A673 (cell line): ENCODE measurements at regions of chr9 and their contacts with region 1.

Region 1: GRCh38 chr9:80449513-80449912 is 877.7 kb downstream of the TLE4 start:
- DNase-seq: no peak
- H3K4me3 ChIP-seq: no peak overlapping the region
- H3K27ac ChIP-seq: peak overlapping the region; percentile 82
- H3K4me1 ChIP-seq: peaks cover 16% of the 10 kb centered on the region
- H3K27me3 ChIP-seq: no peaks in the 10 kb centered on the region
- CTCF ChIP-seq: no peak

Region 2: GRCh38 chr9:79471580-79472543 is 977.7 kb before region 1 on chr9:
- CTCF ChIA-PET with region 1: no interaction called
- POLR2A ChIA-PET with region 1: no interaction called
- intact Hi-C with region 1: loop called (anchors 5 kb)
- DNase-seq: peak; percentile 61
- H3K4me3 ChIP-seq: no peak overlapping the region
- H3K27ac ChIP-seq: no peak overlapping the region
- H3K4me1 ChIP-seq: no peaks in the 10 kb centered on the region
- H3K27me3 ChIP-seq: no peaks in the 10 kb centered on the region
- CTCF ChIP-seq: peak; percentile 53

Region 3: DNA sequence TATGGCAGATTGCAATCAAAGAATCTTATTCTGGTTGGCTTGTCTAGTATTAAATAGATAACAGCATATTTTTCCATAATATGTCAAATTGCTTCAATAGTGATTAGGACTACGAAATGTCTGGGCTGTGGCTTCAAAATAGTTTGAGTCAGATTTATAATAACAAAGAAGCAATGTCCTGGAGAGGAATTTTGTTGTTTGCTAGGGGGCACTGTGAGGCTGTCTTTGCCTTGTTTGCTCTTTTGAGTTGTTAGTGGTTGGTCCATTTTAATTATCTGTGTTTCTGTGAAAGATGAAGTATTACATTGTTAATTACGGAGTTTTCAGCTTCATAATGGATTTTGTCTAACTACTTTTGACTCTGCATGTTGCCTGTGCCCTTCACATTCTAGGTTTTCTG is 164.2 kb before region 1 on chr9:
- CTCF ChIA-PET with region 1: no interaction called
- POLR2A ChIA-PET with region 1: no interaction called
- intact Hi-C with region 1: loop called (anchors 1 kb)
- DNase-seq: peak; percentile 17
- H3K4me3 ChIP-seq: no peak overlapping the region
- H3K27ac ChIP-seq: no peak overlapping the region
- H3K4me1 ChIP-seq: no peaks in the 10 kb centered on the region
- H3K27me3 ChIP-seq: no peaks in the 10 kb centered on the region
- CTCF ChIP-seq: peak; percentile 54

Region 4: GRCh38 chr9:80400624-80401230 is 48.8 kb before region 1 on chr9:
- CTCF ChIA-PET with region 1: no interaction called
- POLR2A ChIA-PET with region 1: no interaction called
- intact Hi-C with region 1: no loop called
- DNase-seq: no peak
- H3K4me3 ChIP-seq: no peak overlapping the region
- H3K27ac ChIP-seq: no peak overlapping the region
- H3K4me1 ChIP-seq: no peaks in the 10 kb centered on the region
- H3K27me3 ChIP-seq: no peaks in the 10 kb centered on the region
- CTCF ChIP-seq: no peak

Region 5: GRCh38 chr9:80586786-80587330 is 137.3 kb after region 1 on chr9:
- CTCF ChIA-PET with region 1: interaction called, 5 read pairs
- POLR2A ChIA-PET with region 1: no interaction called
- intact Hi-C with region 1: loop called (anchors 5 kb)
- DNase-seq: peak; percentile 82
- H3K4me3 ChIP-seq: no peak overlapping the region
- H3K27ac ChIP-seq: no peak overlapping the region
- H3K4me1 ChIP-seq: peaks cover 33% of the 10 kb centered on the region
- H3K27me3 ChIP-seq: no peaks in the 10 kb centered on the region
- CTCF ChIP-seq: no peak

Region 6: GRCh38 chr9:80797831-80798688 is 348.5 kb after region 1 on chr9:
- CTCF ChIA-PET with region 1: no interaction called
- POLR2A ChIA-PET with region 1: no interaction called
- intact Hi-C with region 1: loop called (anchors 2 kb)
- DNase-seq: peak; percentile 93
- H3K4me3 ChIP-seq: no peak overlapping the region
- H3K27ac ChIP-seq: peak overlapping the region; percentile 22
- H3K4me1 ChIP-seq: peaks cover 26% of the 10 kb centered on the region
- H3K27me3 ChIP-seq: no peaks in the 10 kb centered on the region
- CTCF ChIP-seq: no peak